Activated CD4-positive, alpha-beta memory T cell treated with anti-CD3 and anti-CD28 coated beads for 36 hours (primary cell): ENCODE measurements at regions of chr6 and their contacts with region 1.

Region 1: GRCh38 chr6:36800223-36801076 is 38.8 kb downstream of the CPNE5 start:
- DNase-seq: no peak
- H3K4me3 Mint-ChIP-seq: no peak overlapping the region
- H3K27ac Mint-ChIP-seq: no peak overlapping the region
- H3K4me1 Mint-ChIP-seq: no peaks in the 10 kb centered on the region
- H3K27me3 Mint-ChIP-seq: peaks cover 1% of the 10 kb centered on the region

Region 2: GRCh38 chr6:36735110-36736071 is 65.1 kb before region 1 on chr6:
- CTCF ChIA-PET with region 1: no interaction called
- POLR2A ChIA-PET with region 1: no interaction called
- intact Hi-C with region 1: no loop called
- DNase-seq: peak; percentile 55
- H3K4me3 Mint-ChIP-seq: peak overlapping the region; percentile 31
- H3K27ac Mint-ChIP-seq: peak overlapping the region; percentile 50
- H3K4me1 Mint-ChIP-seq: peaks cover 11% of the 10 kb centered on the region
- H3K27me3 Mint-ChIP-seq: no peaks in the 10 kb centered on the region

Region 3: DNA sequence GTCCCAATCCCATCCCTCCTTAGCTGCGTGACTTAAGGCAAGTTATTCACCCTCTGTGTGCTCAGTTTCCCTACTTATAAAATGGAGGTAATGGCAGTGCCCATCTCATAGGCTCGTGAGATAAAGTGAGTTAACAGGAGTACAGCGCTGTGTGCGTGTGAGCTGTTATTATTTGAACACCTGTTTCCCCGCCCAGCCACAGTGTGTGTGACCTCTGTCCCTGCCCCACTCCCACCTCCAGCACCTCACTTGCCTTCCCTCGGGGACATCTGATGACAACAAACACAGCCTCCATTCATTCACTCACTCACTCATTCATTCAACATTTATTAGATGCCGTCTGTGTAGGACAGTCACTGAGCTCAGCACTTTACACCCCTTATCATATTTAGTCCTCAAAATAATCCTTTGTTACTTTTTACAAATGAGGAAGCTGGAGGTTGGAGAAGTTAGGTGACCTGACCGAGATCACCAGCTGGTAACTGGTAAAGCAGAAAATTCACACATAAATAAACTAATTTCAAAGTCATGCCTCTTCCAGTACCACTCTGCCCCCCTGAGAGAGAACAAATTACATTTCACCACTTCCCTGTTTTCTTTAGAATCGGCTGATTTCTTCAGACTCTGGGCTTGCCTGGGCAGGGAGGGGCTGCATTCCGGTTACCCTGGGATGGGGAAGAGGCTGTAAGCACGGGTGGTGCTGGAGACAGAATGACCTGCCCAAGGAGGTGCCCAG is 19.8 kb before region 1 on chr6:
- CTCF ChIA-PET with region 1: interaction called, 11 read pairs
- POLR2A ChIA-PET with region 1: no interaction called
- intact Hi-C with region 1: no loop called
- DNase-seq: no peak
- H3K4me3 Mint-ChIP-seq: no peak overlapping the region
- H3K27ac Mint-ChIP-seq: no peak overlapping the region
- H3K4me1 Mint-ChIP-seq: peaks cover 2% of the 10 kb centered on the region
- H3K27me3 Mint-ChIP-seq: no peaks in the 10 kb centered on the region

Region 4: DNA sequence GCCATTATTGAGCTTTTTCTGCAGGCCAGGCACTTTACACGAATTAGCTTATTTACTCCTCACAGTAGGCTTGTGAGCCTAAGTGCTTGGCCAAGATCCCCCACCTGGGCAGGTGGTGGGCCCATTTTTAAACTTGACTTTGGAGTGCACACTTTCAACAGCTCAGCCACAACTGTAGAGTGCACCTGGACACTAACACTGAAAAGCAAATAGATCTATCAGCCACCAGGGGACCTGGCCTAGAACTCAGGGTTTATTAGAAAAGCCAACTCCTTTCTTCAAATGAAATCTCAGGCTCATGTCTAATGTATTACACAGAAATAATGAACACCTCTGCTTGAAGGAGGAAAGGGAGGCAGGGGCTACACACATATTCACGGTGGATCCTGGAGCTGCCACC is 10.9 kb after region 1 on chr6:
- CTCF ChIA-PET with region 1: no interaction called
- POLR2A ChIA-PET with region 1: no interaction called
- intact Hi-C with region 1: no loop called
- DNase-seq: no peak
- H3K4me3 Mint-ChIP-seq: no peak overlapping the region
- H3K27ac Mint-ChIP-seq: no peak overlapping the region
- H3K4me1 Mint-ChIP-seq: no peaks in the 10 kb centered on the region
- H3K27me3 Mint-ChIP-seq: no peaks in the 10 kb centered on the region